GM10248 (cell line): ENCODE measurements at regions of chr1 and their contacts with region 1.

Region 1: GRCh38 chr1:19139711-19140110 is 70.4 kb downstream of the UBR4 start:
- DNase-seq: no peak
- CTCF ChIP-seq: no peak

Region 2: GRCh38 chr1:18972531-18972930 is 167.2 kb before region 1 on chr1:
- CTCF ChIA-PET with region 1: no interaction called
- POLR2A ChIA-PET with region 1: no interaction called
- DNase-seq: no peak
- CTCF ChIP-seq: peak; percentile 15

Region 3: GRCh38 chr1:19128968-19129514 is 10.7 kb before region 1 on chr1:
- CTCF ChIA-PET with region 1: interaction called, 12 read pairs
- POLR2A ChIA-PET with region 1: interaction called, 4 read pairs
- DNase-seq: no peak
- CTCF ChIP-seq: no peak

Region 4: DNA sequence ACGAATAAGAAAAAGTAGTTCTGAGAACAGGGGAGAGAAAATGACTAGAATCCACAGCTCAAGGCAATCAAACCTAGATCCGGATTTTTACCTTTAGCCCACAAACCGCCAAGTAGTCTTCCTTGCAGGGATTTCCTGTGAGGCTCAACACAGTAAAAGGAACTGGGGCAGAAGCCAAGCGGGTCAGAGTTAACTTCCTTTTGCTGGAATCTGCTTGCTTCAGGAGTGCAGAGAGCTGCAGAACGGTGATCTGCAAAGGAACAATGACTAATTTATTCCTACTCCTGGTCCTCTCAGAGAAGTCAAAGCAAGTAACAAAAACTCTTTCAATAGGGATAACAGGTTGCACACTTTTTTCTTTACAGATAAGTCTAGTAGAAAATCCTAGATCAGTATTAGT is 17.0 kb after region 1 on chr1:
- CTCF ChIA-PET with region 1: interaction called, 14 read pairs
- POLR2A ChIA-PET with region 1: no interaction called
- DNase-seq: no peak
- CTCF ChIP-seq: no peak